ENCODE measurements at regions of chr1 and their contacts with region 1.

Region 1: GRCh38 chr1:46442317-46443161 is 47.1 kb upstream of the DMBX1 start:
- DNase-seq: peak; percentile 39 to 75 (median 63)
- ATAC-seq: peak; percentile 79
- H3K4me3 ChIP-seq: peak overlapping the region; percentile 75
- H3K4me3 Mint-ChIP-seq: peak overlapping the region; percentile 77 to 95 (median 89)
- H3K27ac ChIP-seq: no peak overlapping the region
- H3K27ac Mint-ChIP-seq: peak overlapping the region in 1 of 9 donors; percentile 47
- H3K4me1 ChIP-seq: peaks cover 0 to 1% of the 10 kb centered on the region in 2 donors
- H3K4me1 Mint-ChIP-seq: peaks cover 13 to 20% (median 14%) of the 10 kb centered on the region in 7 donors
- H3K27me3 ChIP-seq: peaks cover 0 to 5% of the 10 kb centered on the region in 2 donors
- H3K27me3 Mint-ChIP-seq: peaks cover 8 to 45% (median 20%) of the 10 kb centered on the region in 5 donors

Region 2: DNA sequence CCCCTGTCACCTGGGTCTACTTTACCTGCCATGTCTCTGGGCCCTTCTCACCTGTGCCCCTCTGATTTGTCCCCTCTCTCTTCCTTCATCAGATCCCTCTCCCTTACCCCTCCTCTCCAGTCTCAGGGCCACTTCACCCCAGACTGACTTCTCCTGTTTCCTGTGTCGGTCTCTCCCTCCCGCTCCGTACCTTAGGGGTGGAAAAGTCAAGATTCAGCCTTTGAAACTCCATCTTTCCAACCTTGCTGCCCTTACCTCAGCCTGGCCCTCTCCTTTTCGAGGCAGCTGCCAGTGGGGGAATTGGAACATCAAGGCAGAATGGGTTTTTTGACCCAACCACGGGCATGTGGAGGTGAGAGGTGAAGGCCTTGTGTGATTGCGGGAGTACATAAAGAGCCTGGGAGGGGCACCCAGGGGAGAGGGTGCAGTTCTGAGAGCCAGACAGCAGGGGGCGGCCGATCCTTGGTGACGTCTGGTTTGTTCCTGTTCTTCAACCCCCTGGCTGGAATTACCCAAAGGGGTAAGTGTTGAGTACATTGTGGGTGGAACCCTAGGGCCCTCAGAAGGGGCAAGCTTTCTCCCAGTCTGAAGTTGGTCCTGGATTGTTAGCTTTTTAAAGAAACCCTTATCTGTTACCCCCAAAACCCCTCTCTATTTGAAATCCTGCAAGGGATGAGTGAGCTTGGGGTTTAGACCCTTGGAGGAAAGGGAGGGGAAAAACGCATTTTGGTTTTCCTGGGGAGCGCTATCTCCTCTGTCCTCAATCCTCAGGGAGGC is 34.8 kb after region 1 on chr1:
- CTCF ChIA-PET with region 1: interaction called, 3 read pairs
- POLR2A ChIA-PET with region 1: interaction called, 4 read pairs
- intact Hi-C with region 1: loop called in 1 of 2 experiments (anchors 1 kb)
- DNase-seq: peak; percentile 44 to 79 (median 60)
- ATAC-seq: peak; percentile 92
- H3K4me3 ChIP-seq: no peak overlapping the region
- H3K4me3 Mint-ChIP-seq: no peak overlapping the region
- H3K27ac ChIP-seq: no peak overlapping the region
- H3K27ac Mint-ChIP-seq: peak overlapping the region in 1 of 9 donors; percentile 55
- H3K4me1 ChIP-seq: no peaks in the 10 kb centered on the region
- H3K4me1 Mint-ChIP-seq: no peaks in the 10 kb centered on the region
- H3K27me3 ChIP-seq: no peaks in the 10 kb centered on the region
- H3K27me3 Mint-ChIP-seq: peaks cover 13 to 60% (median 28%) of the 10 kb centered on the region in 5 donors

Region 3: DNA sequence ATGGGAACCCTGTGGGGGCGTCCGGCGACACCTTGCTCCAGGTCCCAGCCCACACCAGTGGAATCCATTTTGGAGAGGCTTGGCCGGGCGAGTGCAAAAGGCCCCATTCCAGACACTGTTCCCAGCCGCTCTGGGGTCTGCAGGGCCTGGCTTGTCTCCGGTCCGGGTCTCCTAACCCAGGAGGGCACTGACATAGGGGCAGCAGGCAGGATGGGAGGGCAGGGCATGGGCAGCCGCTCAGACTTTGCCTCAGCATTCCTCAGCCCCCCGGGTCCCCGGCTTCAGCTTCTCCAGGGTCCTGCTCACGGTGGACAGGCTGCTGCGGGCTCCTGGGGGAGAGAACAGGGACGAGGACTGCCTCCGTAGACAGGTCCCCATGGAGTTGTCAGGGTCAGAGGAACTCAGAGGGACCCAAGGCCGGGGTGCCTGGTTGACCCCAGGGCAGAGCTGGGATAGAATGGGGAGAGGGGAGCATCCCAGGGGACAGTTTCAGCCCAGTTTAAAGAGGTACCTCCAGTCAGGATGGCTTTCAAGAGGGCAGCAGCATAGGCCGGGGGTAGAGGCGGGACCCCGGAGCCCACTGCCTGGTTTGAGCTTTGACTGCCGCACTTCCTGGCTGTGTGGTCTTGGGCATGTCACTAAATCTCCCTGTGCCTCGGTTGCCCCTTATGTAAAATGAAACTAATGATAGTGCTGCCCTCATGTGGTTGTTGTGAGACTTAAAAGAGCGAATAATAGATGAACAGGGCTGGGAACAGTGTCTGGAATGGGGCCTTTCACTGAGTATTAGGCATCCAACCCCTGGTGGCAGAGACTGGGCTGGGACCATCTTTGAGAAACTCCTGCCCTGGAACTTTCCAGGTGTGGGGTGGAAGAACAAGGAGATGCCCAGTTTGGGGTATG is 105.2 kb after region 1 on chr1:
- CTCF ChIA-PET with region 1: no interaction called
- POLR2A ChIA-PET with region 1: no interaction called
- intact Hi-C with region 1: loop called in 1 of 2 experiments (anchors 1 kb)
- DNase-seq: peak in 1 of 9 donors; percentile 14
- ATAC-seq: no peak
- H3K4me3 ChIP-seq: no peak overlapping the region
- H3K4me3 Mint-ChIP-seq: no peak overlapping the region
- H3K27ac ChIP-seq: no peak overlapping the region
- H3K27ac Mint-ChIP-seq: no peak overlapping the region
- H3K4me1 ChIP-seq: peaks cover 0 to 12% of the 10 kb centered on the region in 2 donors
- H3K4me1 Mint-ChIP-seq: peaks cover 4 to 20% (median 9%) of the 10 kb centered on the region in 7 donors
- H3K27me3 ChIP-seq: peaks cover 6 to 9% of the 10 kb centered on the region in 2 donors
- H3K27me3 Mint-ChIP-seq: peaks cover 40 to 49% (median 43%) of the 10 kb centered on the region in 5 donors

Measured in naive thymus-derived CD4-positive, alpha-beta T cell (primary cell).